ENCODE measurements at regions of chr7 and their contacts with region 1.

Region 1: GRCh38 chr7:92260248-92260781 is 14.5 kb downstream of the ANKIB1 start:
- DNase-seq: no peak
- ATAC-seq: no peak
- H3K4me3 ChIP-seq: no peak overlapping the region
- H3K27ac ChIP-seq: no peak overlapping the region
- H3K4me1 ChIP-seq: no peaks in the 10 kb centered on the region
- H3K27me3 ChIP-seq: no peaks in the 10 kb centered on the region
- CTCF ChIP-seq: no peak
- EP300 ChIP-seq: no peak
- POLR2A ChIP-seq: no peak
- RAD21 ChIP-seq: no peak

Region 2: DNA sequence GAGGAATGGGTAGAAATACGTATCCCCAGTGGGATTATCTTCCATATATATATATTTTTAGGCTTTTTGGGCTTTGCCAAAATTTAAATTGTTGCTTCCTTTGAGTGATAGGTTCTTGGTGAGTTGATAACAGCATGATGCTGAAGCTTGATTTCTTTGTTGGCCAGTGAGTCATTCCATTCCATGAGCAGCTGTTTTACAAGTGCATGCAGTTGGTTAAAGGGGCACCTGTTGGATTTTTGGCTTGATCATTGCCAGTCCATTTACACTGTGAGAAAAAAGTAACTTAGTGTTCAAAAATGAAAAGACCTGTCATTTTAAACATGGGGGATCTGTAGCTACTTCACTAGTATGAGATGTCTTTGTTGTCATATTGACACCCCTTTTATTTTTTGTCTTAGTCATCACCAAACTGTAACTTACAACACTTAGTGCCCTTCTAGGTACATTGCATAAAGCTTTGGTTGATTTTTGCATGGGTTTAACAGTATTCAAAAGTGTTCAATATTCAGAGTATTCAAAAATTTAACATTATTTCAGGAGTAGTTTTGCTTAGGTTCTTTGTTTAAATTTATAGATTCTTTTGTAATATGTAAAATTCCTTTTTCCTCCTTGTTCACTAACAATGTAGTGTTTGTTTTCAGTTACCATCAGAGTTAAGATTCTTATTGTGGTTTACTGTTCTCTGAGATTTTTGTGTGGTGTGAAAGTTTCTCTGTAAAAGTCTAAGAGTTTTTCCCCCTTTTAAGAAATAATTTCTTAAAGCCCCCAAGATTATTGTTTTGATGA is 310.9 kb before region 1 on chr7:
- CTCF ChIA-PET with region 1: no interaction called
- POLR2A ChIA-PET with region 1: no interaction called
- RAD21 ChIA-PET with region 1: no interaction called
- SMC1A ChIA-PET with region 1: no interaction called
- in situ Hi-C with region 1: no loop called
- intact Hi-C with region 1: no loop called
- DNase-seq: no peak
- ATAC-seq: peak; percentile 72
- H3K4me3 ChIP-seq: no peak overlapping the region
- H3K27ac ChIP-seq: peak overlapping the region; percentile 45; the same call in 1 of the 2 replicates
- H3K4me1 ChIP-seq: peaks cover 9% of the 10 kb centered on the region
- H3K27me3 ChIP-seq: no peaks in the 10 kb centered on the region
- CTCF ChIP-seq: no peak
- EP300 ChIP-seq: no peak
- POLR2A ChIP-seq: no peak
- RAD21 ChIP-seq: no peak

Region 3: GRCh38 chr7:92200791-92201190 is 59.5 kb before region 1 on chr7:
- CTCF ChIA-PET with region 1: no interaction called
- POLR2A ChIA-PET with region 1: no interaction called
- RAD21 ChIA-PET with region 1: no interaction called
- SMC1A ChIA-PET with region 1: no interaction called
- in situ Hi-C with region 1: no loop called
- intact Hi-C with region 1: no loop called
- DNase-seq: no peak
- ATAC-seq: no peak
- H3K4me3 ChIP-seq: no peak overlapping the region
- H3K27ac ChIP-seq: no peak overlapping the region
- H3K4me1 ChIP-seq: no peaks in the 10 kb centered on the region
- H3K27me3 ChIP-seq: no peaks in the 10 kb centered on the region
- CTCF ChIP-seq: peak in 1 of 3 experiments; percentile 21; a peak in 1 of 6 replicates
- EP300 ChIP-seq: no peak
- POLR2A ChIP-seq: no peak
- RAD21 ChIP-seq: no peak

Region 4: DNA sequence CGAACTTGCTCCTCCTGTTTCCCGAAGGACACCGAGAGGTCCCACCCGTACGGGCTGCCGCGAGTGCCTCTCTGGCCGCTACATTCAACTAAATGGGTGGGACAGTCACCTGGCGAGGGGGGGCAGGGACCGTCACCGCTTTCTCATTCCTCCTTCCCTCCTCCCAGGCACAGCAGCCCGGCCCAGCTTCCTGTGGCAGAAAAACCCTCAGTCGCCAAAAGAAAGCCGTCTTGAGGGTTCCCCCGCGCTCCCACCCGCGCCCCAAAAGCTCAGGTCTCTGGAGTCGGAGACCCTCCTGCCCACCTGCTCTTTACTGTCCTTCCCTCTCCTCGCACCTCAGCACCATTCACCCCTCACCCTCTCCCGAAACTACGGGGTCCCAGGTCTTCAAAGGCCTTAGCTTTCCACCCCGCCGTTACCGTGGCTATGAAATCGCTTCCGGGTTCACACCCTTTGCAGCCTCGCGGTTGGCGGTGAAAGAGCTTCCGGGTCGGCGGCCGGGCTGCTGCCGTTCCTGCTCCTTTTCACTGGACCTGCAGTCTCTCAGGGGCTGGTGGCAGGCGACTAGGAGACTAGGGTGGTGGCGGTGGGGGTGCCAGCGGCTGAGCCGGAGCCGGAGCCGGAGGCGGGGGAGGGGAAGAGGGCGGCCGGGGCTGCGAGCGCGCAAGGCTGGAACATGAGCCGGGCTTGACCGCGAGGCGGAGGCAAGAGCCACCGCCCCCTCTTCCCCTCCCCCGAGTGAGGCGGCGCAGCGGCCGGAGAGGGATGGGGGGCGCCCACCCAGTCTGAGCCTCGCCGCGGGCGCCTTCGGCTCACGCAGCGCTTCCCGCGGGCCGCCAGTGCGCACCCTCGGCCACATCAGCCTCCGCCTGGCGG is 14.6 kb before region 1 on chr7 and contains the starts of genes ANKIB1 and KRIT1:
- CTCF ChIA-PET with region 1: interaction called, 4 read pairs
- POLR2A ChIA-PET with region 1: interaction called, 5 read pairs
- RAD21 ChIA-PET with region 1: interaction called, 3 read pairs
- SMC1A ChIA-PET with region 1: interaction called, 10 read pairs
- in situ Hi-C with region 1: no loop called
- intact Hi-C with region 1: no loop called
- DNase-seq: peak; percentile 51
- ATAC-seq: peak; percentile 84
- H3K4me3 ChIP-seq: peak within 1 kb of the TSS; percentile 93
- H3K27ac ChIP-seq: peak within 1 kb of the TSS; percentile 90
- H3K4me1 ChIP-seq: no peaks in the 10 kb centered on the region
- H3K27me3 ChIP-seq: no peaks in the 10 kb centered on the region
- CTCF ChIP-seq: peak; percentile 2 to 16 (median 13); a peak in 3 of 6 replicates
- EP300 ChIP-seq: no peak
- POLR2A ChIP-seq: peak; percentile 90
- RAD21 ChIP-seq: no peak
- polyA plus RNA-seq, gene ANKIB1: 9.7 to 14.6 TPM
- polyA plus RNA-seq, gene KRIT1: 12.0 to 12.8 TPM

Measured in GM12878 (cell line).